ENCODE measurements at regions of chr2 and their contacts with region 1.

Region 1: GRCh38 chr2:54330162-54330925 is 74.3 kb upstream of the TSPYL6 start:
- DNase-seq: peak; percentile 96
- H3K4me3 ChIP-seq: peak overlapping the region; percentile 60
- H3K4me3 Mint-ChIP-seq: peak overlapping the region; percentile 90
- H3K27ac Mint-ChIP-seq: peak overlapping the region; percentile 86
- H3K4me1 ChIP-seq: no peaks in the 10 kb centered on the region
- H3K4me1 Mint-ChIP-seq: peaks cover 13% of the 10 kb centered on the region
- H3K27me3 ChIP-seq: no peaks in the 10 kb centered on the region
- H3K27me3 Mint-ChIP-seq: peaks cover 4% of the 10 kb centered on the region
- CTCF ChIP-seq: no peak

Region 2: DNA sequence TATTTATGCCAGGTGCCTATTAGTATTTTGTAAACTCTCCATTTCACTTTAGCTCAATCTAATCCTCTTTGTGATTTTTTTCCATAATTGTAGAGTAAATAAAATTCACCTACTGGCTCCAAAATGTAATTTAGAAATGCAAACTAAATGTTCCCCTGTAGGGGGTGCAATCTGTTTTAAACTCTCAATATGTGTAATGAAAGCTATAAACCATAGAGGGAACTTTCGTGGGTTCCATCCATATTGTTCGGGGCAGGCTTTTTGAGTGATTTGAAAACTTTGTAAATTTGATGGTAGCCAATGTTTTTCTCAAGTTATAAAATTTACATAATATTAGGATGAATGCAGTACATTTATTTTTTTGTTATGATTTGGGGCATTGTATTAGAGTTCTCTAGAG is 123.7 kb before region 1 on chr2:
- CTCF ChIA-PET with region 1: no interaction called
- POLR2A ChIA-PET with region 1: no interaction called
- intact Hi-C with region 1: loop called (anchors 2 kb)
- DNase-seq: peak in 1 of 2 experiments; percentile 39
- H3K4me3 ChIP-seq: no peak overlapping the region
- H3K4me3 Mint-ChIP-seq: no peak overlapping the region
- H3K27ac Mint-ChIP-seq: no peak overlapping the region
- H3K4me1 ChIP-seq: 0 out of 2 replicates have a peak, but pooled peaks cover 5% of the 10 kb centered on the region
- H3K4me1 Mint-ChIP-seq: peaks cover 27% of the 10 kb centered on the region
- H3K27me3 ChIP-seq: no peaks in the 10 kb centered on the region
- H3K27me3 Mint-ChIP-seq: no peaks in the 10 kb centered on the region
- CTCF ChIP-seq: peak; percentile 43 to 50

Region 3: GRCh38 chr2:54279385-54279784 is 51.0 kb before region 1 on chr2:
- CTCF ChIA-PET with region 1: no interaction called
- POLR2A ChIA-PET with region 1: no interaction called
- intact Hi-C with region 1: no loop called
- DNase-seq: peak in 1 of 2 experiments; percentile 22
- H3K4me3 ChIP-seq: no peak overlapping the region
- H3K4me3 Mint-ChIP-seq: no peak overlapping the region
- H3K27ac Mint-ChIP-seq: no peak overlapping the region
- H3K4me1 ChIP-seq: no peaks in the 10 kb centered on the region
- H3K4me1 Mint-ChIP-seq: no peaks in the 10 kb centered on the region
- H3K27me3 ChIP-seq: no peaks in the 10 kb centered on the region
- H3K27me3 Mint-ChIP-seq: no peaks in the 10 kb centered on the region
- CTCF ChIP-seq: peak; percentile 23 to 43

Region 4: GRCh38 chr2:54295911-54296310 is 34.4 kb before region 1 on chr2:
- CTCF ChIA-PET with region 1: no interaction called
- POLR2A ChIA-PET with region 1: no interaction called
- intact Hi-C with region 1: no loop called
- DNase-seq: no peak
- H3K4me3 ChIP-seq: no peak overlapping the region
- H3K4me3 Mint-ChIP-seq: no peak overlapping the region
- H3K27ac Mint-ChIP-seq: no peak overlapping the region
- H3K4me1 ChIP-seq: no peaks in the 10 kb centered on the region
- H3K4me1 Mint-ChIP-seq: peaks cover 1% of the 10 kb centered on the region
- H3K27me3 ChIP-seq: no peaks in the 10 kb centered on the region
- H3K27me3 Mint-ChIP-seq: no peaks in the 10 kb centered on the region
- CTCF ChIP-seq: no peak

Region 5: GRCh38 chr2:54455563-54456361 is 125.4 kb after region 1 on chr2 and contains the start of gene SPTBN1:
- CTCF ChIA-PET with region 1: no interaction called
- POLR2A ChIA-PET with region 1: no interaction called
- intact Hi-C with region 1: loop called (anchors 5 kb)
- DNase-seq: peak; percentile 80 to 82
- H3K4me3 ChIP-seq: peak within 1 kb of the TSS; percentile 77
- H3K4me3 Mint-ChIP-seq: peak within 1 kb of the TSS; percentile 85
- H3K27ac Mint-ChIP-seq: peak within 1 kb of the TSS; percentile 31
- H3K4me1 ChIP-seq: peaks cover 12% of the 10 kb centered on the region; the same call in 1 of the 2 replicates
- H3K4me1 Mint-ChIP-seq: peaks cover 21% of the 10 kb centered on the region
- H3K27me3 ChIP-seq: no peaks in the 10 kb centered on the region
- H3K27me3 Mint-ChIP-seq: no peaks in the 10 kb centered on the region
- CTCF ChIP-seq: no peak
- total RNA-seq, gene SPTBN1: 361 and 383 TPM in 2 replicates

Measured in Caco-2 (cell line).